GM10248 (cell line): ENCODE measurements at regions of chr11 and their contacts with region 1.

Region 1: GRCh38 chr11:17230867-17231851 is 23.4 kb upstream of the PIK3C2A start:
- DNase-seq: no peak
- CTCF ChIP-seq: no peak

Region 2: DNA sequence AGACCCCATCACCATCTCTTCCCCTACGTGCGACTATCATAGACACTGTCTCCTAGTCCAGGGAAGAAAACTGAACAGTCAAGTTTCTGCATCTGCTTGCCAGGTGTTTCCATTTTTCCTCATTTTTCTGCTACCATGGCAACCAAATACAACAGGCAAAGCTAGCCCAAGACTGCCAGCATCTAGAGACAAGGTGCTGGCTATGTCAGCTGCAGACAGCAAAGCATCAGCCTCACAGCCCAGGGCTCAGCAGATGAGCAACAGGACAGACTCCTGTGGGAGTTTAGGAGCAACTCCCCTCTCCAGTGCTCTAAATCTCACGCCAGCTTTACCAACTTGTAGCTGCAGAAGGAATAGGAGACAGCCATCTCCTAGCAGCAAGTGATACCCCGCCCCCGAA is 368.4 kb before region 1 on chr11:
- CTCF ChIA-PET with region 1: no interaction called
- POLR2A ChIA-PET with region 1: no interaction called
- DNase-seq: no peak
- CTCF ChIP-seq: no peak

Region 3: GRCh38 chr11:16956538-16957153 is 274.5 kb before region 1 on chr11:
- CTCF ChIA-PET with region 1: no interaction called
- POLR2A ChIA-PET with region 1: no interaction called
- DNase-seq: no peak
- CTCF ChIP-seq: no peak

Region 4: DNA sequence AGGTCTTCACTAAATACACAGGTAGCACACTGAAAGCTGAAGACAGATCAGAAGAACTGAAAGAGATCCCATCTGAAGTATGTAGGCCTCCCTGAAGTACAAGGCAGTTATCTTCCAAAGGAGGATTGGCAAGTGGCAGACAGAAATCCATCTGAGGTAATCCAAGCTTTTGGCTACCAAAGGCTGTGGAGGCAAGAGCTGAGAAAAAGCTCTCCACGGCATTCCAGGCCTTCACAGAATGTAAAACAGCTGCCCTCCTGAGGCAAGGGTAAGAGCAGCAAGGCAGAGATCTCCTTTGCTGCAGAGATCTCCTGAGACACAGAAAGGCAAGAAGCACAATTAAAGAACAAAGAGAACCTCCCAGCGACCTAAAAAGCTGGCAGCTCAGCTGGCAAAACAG is 42.5 kb before region 1 on chr11:
- CTCF ChIA-PET with region 1: no interaction called
- POLR2A ChIA-PET with region 1: no interaction called
- DNase-seq: no peak
- CTCF ChIP-seq: no peak

Region 5: GRCh38 chr11:17207317-17208258 is 23.6 kb before region 1 on chr11 and contains the start of gene PIK3C2A:
- CTCF ChIA-PET with region 1: interaction called, 22 read pairs
- POLR2A ChIA-PET with region 1: interaction called, 3 read pairs
- DNase-seq: peak; percentile 96
- CTCF ChIP-seq: no peak

Region 6: DNA sequence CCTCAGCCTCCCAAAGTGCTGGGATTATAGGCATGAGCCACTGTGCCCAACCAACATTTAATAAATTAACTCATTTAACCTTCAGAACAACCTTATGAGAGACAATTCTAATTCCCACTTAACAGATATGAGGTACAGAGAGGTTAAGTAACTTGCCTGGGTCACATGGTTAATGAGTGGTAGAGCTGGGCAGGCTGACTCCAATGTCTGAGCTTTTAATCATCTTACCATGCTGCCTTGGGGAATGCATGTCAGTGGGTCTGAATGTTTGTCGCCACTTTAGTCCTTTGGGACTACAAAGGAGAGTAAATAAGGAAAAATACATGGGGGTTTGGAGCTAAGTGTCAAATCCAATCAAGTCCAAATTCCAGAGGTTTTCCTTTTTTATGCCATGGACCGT is 12.1 kb before region 1 on chr11:
- CTCF ChIA-PET with region 1: interaction called, 21 read pairs
- POLR2A ChIA-PET with region 1: no interaction called
- DNase-seq: no peak
- CTCF ChIP-seq: no peak

Region 7: DNA sequence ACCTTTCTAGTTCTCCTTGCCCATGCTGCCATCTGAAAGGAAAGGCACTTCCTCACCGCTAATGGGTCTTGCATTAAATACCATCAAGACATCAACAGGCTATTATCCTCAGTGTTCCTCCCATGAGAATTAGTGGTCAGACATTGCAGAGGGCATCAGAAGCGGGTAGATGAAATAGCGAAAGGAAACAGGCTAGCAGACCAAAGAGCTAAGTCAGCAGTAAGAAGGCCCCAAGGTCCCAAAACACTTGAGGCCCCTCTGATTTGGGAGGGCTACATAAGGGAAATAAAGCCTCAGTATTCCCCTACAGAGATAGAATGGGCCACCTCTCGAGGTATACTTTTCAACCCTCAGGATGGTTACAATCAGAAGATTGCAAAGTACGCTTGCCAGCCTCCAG is 144.4 kb after region 1 on chr11:
- CTCF ChIA-PET with region 1: no interaction called
- POLR2A ChIA-PET with region 1: no interaction called
- DNase-seq: no peak
- CTCF ChIP-seq: no peak

Region 8: GRCh38 chr11:17504330-17505107 is 273.4 kb after region 1 on chr11:
- CTCF ChIA-PET with region 1: interaction called, 10 read pairs
- POLR2A ChIA-PET with region 1: no interaction called
- DNase-seq: peak; percentile 77
- CTCF ChIP-seq: peak; percentile 90

Region 9: GRCh38 chr11:17528181-17528691 is 297.1 kb after region 1 on chr11:
- CTCF ChIA-PET with region 1: interaction called, 15 read pairs
- POLR2A ChIA-PET with region 1: no interaction called
- DNase-seq: peak; percentile 78
- CTCF ChIP-seq: peak; percentile 58